Naive thymus-derived CD4-positive, alpha-beta T cell (primary cell): ENCODE measurements at regions of chr6 and their contacts with region 1.

Region 1: GRCh38 chr6:4018172-4018905 is 60.6 kb downstream of the FAM217A start:
- DNase-seq: peak; percentile 91 to 98 (median 95)
- ATAC-seq: peak; percentile 83
- H3K4me3 ChIP-seq: peak overlapping the region; percentile 76
- H3K4me3 Mint-ChIP-seq: peak overlapping the region; percentile 86 to 99 (median 94)
- H3K27ac ChIP-seq: peak overlapping the region; percentile 95
- H3K27ac Mint-ChIP-seq: peak overlapping the region; percentile 95 to 100 (median 96)
- H3K4me1 ChIP-seq: peaks cover 27 to 39% of the 10 kb centered on the region in 2 donors
- H3K4me1 Mint-ChIP-seq: peaks cover 45 to 88% (median 70%) of the 10 kb centered on the region in 7 donors
- H3K27me3 ChIP-seq: no peaks in the 10 kb centered on the region
- H3K27me3 Mint-ChIP-seq: no peaks in the 10 kb centered on the region

Region 2: DNA sequence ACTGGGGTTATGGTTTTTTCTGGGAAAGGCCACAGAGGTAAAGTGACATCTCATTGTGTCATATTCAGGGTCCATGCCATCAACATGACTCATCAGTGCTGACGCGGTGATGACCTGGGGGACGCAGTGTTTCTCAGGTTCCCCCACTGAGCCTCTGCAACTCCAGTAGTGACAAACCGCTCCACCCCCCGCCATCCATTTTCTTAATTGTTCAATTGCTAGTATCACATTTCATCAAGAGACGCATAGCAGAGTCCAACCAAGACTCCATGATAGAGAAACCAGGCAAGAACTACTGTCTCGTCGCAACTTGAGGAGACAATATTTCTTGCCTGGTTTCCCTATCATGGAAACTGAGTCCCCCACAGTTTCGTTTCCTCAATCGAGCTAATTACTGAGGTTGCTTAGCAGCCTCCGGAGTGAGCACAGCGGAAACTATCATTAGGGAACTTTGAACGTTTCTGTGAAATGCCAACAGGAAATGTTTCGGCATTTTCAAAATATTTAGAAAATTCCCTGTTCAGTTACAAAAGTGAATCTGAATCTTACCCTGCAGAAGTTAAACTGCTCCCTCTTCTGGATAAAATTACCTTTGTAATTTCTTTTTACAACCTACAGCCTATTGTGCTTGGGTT is 1164.5 kb before region 1 on chr6:
- CTCF ChIA-PET with region 1: no interaction called
- POLR2A ChIA-PET with region 1: no interaction called
- intact Hi-C with region 1: loop called in 1 of 2 experiments (anchors 10 kb)
- DNase-seq: peak in 5 of 9 donors; percentile 23 to 70 (median 40)
- ATAC-seq: peak; percentile 61
- H3K4me3 ChIP-seq: peak overlapping the region; percentile 53
- H3K4me3 Mint-ChIP-seq: peak overlapping the region; percentile 65 to 97 (median 78)
- H3K27ac ChIP-seq: peak overlapping the region; percentile 65
- H3K27ac Mint-ChIP-seq: peak overlapping the region; percentile 79 to 100 (median 98)
- H3K4me1 ChIP-seq: peaks cover 59 to 61% of the 10 kb centered on the region in 2 donors
- H3K4me1 Mint-ChIP-seq: peaks cover 42 to 74% (median 71%) of the 10 kb centered on the region in 7 donors
- H3K27me3 ChIP-seq: no peaks in the 10 kb centered on the region
- H3K27me3 Mint-ChIP-seq: no peaks in the 10 kb centered on the region

Region 3: GRCh38 chr6:3258720-3259490 is 759.4 kb before region 1 on chr6 and contains the start of gene PSMG4:
- CTCF ChIA-PET with region 1: no interaction called
- POLR2A ChIA-PET with region 1: interaction called, 5 read pairs
- intact Hi-C with region 1: loop called (anchors 1 kb)
- DNase-seq: peak; percentile 81 to 98 (median 89)
- ATAC-seq: peak; percentile 97
- H3K4me3 ChIP-seq: peak within 1 kb of the TSS; percentile 85
- H3K4me3 Mint-ChIP-seq: peak within 1 kb of the TSS; percentile 85 to 99 (median 97)
- H3K27ac ChIP-seq: peak within 1 kb of the TSS; percentile 80
- H3K27ac Mint-ChIP-seq: peak within 1 kb of the TSS; percentile 84 to 98 (median 92)
- H3K4me1 ChIP-seq: peaks cover 19 to 26% of the 10 kb centered on the region in 2 donors
- H3K4me1 Mint-ChIP-seq: peaks cover 28 to 45% (median 42%) of the 10 kb centered on the region in 7 donors
- H3K27me3 ChIP-seq: no peaks in the 10 kb centered on the region
- H3K27me3 Mint-ChIP-seq: peaks cover 0 to 25% (median 0%) of the 10 kb centered on the region in 5 donors
- total RNA-seq, gene PSMG4: 15.6 to 45.0 (median 27.7) TPM

Region 4: DNA sequence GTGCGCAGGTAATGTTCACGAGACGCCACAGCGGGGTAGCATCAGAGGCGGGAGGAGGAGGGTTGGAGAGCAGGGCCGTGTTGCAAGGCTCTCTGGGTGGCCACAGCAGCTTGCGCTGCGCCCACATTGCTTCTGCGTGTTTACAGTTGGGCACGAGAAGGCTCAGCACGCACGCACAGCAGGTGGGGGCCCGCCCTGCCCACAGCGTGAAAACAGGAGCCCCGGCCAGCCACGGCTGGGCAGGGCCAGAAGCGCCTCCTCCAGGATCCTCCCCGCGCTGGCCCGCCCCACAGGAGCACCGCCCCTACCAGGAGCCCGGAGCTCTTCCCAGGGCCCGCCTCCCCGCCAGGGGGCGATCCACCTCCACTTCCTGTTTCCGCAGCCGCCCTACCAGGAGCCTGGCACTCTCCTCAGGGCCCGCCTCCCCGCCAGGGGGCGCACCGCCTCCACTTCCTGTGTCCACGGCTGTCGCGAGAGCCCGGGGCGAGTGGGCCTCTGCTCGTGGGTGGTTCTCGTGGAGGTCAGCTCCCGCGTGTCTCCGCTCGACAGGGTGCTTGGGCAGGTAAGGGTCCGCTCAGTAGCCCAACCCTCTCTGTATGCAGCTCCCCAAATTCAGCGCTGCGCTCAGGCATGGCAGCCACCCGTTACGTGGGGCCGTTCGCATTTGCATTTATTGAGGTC is 169.3 kb before region 1 on chr6 and contains the start of gene FAM50B:
- CTCF ChIA-PET with region 1: interaction called, 7 read pairs
- POLR2A ChIA-PET with region 1: interaction called, 12 read pairs
- intact Hi-C with region 1: loop called (anchors 1 kb)
- DNase-seq: peak; percentile 84 to 92 (median 90)
- ATAC-seq: peak; percentile 99
- H3K4me3 ChIP-seq: peak within 1 kb of the TSS; percentile 72
- H3K4me3 Mint-ChIP-seq: peak within 1 kb of the TSS; percentile 68 to 89 (median 80)
- H3K27ac ChIP-seq: peak within 1 kb of the TSS; percentile 59
- H3K27ac Mint-ChIP-seq: peak within 1 kb of the TSS; percentile 27 to 95 (median 78)
- H3K4me1 ChIP-seq: peaks cover 0 to 6% of the 10 kb centered on the region in 2 donors
- H3K4me1 Mint-ChIP-seq: peaks cover 0 to 26% (median 16%) of the 10 kb centered on the region in 7 donors
- H3K27me3 ChIP-seq: no peaks in the 10 kb centered on the region
- H3K27me3 Mint-ChIP-seq: peaks cover 0 to 3% (median 0%) of the 10 kb centered on the region in 5 donors
- total RNA-seq, gene FAM50B: 3.4 to 14.1 (median 12.0) TPM

Region 5: GRCh38 chr6:4155848-4156466 is 137.6 kb after region 1 on chr6:
- CTCF ChIA-PET with region 1: interaction called, 3 read pairs
- POLR2A ChIA-PET with region 1: no interaction called
- intact Hi-C with region 1: loop called in 1 of 2 experiments (anchors 2 kb)
- DNase-seq: peak; percentile 33 to 81 (median 71)
- ATAC-seq: peak; percentile 95
- H3K4me3 ChIP-seq: no peak overlapping the region
- H3K4me3 Mint-ChIP-seq: peak overlapping the region in 2 of 10 donors; percentile 20 to 29
- H3K27ac ChIP-seq: no peak overlapping the region
- H3K27ac Mint-ChIP-seq: no peak overlapping the region
- H3K4me1 ChIP-seq: no peaks in the 10 kb centered on the region
- H3K4me1 Mint-ChIP-seq: peaks cover 0 to 24% (median 5%) of the 10 kb centered on the region in 7 donors
- H3K27me3 ChIP-seq: no peaks in the 10 kb centered on the region
- H3K27me3 Mint-ChIP-seq: peaks cover 0 to 12% (median 6%) of the 10 kb centered on the region in 5 donors

Region 6: DNA sequence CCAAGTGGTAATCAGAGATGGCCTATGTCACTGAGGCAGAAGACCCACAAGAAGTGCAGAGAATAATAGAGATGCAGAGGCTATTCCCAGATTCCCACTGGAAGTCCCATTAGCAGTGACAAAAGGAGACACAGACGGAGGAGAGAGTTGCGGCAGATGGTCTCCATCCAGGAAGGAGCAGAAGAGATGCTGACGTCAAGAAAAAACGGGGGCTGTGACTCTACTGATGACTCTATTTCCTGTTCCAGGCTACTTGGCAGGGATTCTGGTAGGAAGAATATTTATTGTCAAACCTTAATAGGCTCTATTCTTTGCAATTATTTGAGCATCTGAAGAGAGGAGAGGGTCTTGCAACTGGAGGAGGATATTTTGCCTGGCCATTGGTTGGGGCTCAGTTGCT is 363.0 kb after region 1 on chr6:
- CTCF ChIA-PET with region 1: no interaction called
- POLR2A ChIA-PET with region 1: no interaction called
- intact Hi-C with region 1: no loop called
- DNase-seq: no peak
- ATAC-seq: no peak
- H3K4me3 ChIP-seq: no peak overlapping the region
- H3K4me3 Mint-ChIP-seq: no peak overlapping the region
- H3K27ac ChIP-seq: no peak overlapping the region
- H3K27ac Mint-ChIP-seq: no peak overlapping the region
- H3K4me1 ChIP-seq: no peaks in the 10 kb centered on the region
- H3K4me1 Mint-ChIP-seq: no peaks in the 10 kb centered on the region
- H3K27me3 ChIP-seq: no peaks in the 10 kb centered on the region
- H3K27me3 Mint-ChIP-seq: peaks cover 3 to 50% (median 23%) of the 10 kb centered on the region in 5 donors

Region 7: DNA sequence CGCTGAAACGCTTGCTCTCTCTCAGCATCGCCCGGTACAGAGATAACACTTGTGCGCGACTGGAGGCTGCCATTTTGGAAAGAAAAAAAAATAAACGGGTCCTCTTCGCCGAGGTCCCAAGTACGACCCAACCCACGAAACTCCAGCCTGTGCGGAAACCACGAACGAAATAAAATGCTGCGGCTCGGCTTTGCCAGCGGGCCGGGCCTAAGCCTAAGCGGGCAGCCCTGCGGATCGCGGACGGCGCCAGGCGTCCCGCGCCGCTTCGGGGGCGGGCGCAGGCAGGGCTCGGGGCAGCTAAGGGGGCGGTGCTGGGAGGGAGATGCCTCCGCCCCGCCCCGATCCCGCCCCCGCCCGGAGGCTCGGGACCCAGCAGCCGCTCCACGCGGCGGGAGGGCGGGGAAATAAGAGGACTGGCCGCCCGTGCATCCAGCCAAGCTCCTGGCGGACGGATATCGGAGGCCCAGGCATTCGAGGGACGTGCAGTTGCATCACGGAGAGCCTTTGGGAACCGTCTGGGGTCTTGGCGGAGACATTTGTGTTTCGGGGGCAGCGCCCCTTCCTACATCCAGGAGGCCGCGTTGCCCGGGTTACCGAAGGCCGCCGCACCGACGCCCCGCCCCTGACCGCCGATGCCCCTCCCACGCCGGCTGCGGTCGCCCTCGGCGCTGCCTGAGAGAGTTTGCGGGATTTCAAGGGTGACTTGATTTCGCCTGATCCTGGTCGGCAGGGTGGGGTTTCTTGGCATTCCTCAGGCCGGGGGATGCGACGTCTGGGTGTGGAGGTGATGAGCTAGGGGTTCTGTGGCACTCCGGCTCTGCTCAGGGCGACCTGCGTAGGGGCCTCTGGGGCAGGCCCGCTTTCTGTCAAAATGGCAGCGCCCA is 1242.6 kb after region 1 on chr6 and contains the starts of genes FARS2 and LYRM4:
- CTCF ChIA-PET with region 1: no interaction called
- POLR2A ChIA-PET with region 1: no interaction called
- intact Hi-C with region 1: loop called (anchors 2 to 5 kb)
- DNase-seq: peak; percentile 86 to 99 (median 97)
- ATAC-seq: peak; percentile 91
- H3K4me3 ChIP-seq: peak within 1 kb of the TSS; percentile 63
- H3K4me3 Mint-ChIP-seq: peak within 1 kb of the TSS; percentile 94 to 100 (median 98)
- H3K27ac ChIP-seq: peak within 1 kb of the TSS; percentile 93
- H3K27ac Mint-ChIP-seq: peak within 1 kb of the TSS; percentile 99 to 100 (median 100)
- H3K4me1 ChIP-seq: peaks cover 9 to 13% of the 10 kb centered on the region in 2 donors
- H3K4me1 Mint-ChIP-seq: peaks cover 18 to 63% (median 43%) of the 10 kb centered on the region in 7 donors
- H3K27me3 ChIP-seq: no peaks in the 10 kb centered on the region
- H3K27me3 Mint-ChIP-seq: no peaks in the 10 kb centered on the region
- total RNA-seq, gene FARS2: 16.2 to 23.1 (median 20.3) TPM
- total RNA-seq, gene LYRM4: 15.1 to 27.2 (median 22.4) TPM